ENCODE measurements at regions of chr12 and their contacts with region 1.

Region 1: DNA sequence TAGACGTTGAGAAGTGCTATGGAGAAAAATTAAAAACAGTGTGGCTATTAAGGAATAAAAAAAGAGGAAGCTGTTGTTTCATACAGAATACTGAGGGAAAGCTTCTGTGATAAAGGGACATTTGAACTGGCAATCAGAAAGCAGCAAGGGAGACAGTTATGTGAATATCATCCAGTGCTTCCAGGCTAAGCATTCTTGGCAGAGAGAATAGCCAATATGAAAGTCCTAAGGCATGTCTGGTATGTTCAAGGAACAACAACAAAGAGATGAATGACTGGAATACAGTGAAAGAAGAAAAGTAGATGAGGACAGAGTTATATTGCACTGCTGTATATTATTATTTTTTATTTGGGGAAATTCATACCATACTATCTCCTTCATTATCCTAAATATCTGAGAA is 23.9 kb downstream of the SCAF11 start:
- DNase-seq: no peak
- ATAC-seq: no peak
- H3K4me3 ChIP-seq: no peak overlapping the region
- H3K4me3 Mint-ChIP-seq: no peak overlapping the region
- H3K27ac ChIP-seq: no peak overlapping the region
- H3K27ac Mint-ChIP-seq: peak overlapping the region in 1 of 2 donors; percentile 2
- H3K4me1 ChIP-seq: peaks cover 2 to 3% of the 10 kb centered on the region in 2 experiments
- H3K4me1 Mint-ChIP-seq: peaks cover 74 to 87% (median 80%) of the 10 kb centered on the region in 3 donors
- H3K27me3 ChIP-seq: no peaks in the 10 kb centered on the region
- H3K27me3 Mint-ChIP-seq: no peaks in the 10 kb centered on the region

Region 2: GRCh38 chr12:47408171-47408871 is 1441.8 kb after region 1 on chr12:
- CTCF ChIA-PET with region 1: interaction called in 1 of 2 experiments, 12 read pairs
- POLR2A ChIA-PET with region 1: no interaction called
- DNase-seq: peak in 19 of 35 experiments; percentile 6 to 66 (median 31)
- ATAC-seq: peak; percentile 60 to 72 (median 64)
- H3K4me3 ChIP-seq: no peak overlapping the region
- H3K4me3 Mint-ChIP-seq: peak overlapping the region in 1 of 3 donors; percentile 53
- H3K27ac ChIP-seq: no peak overlapping the region
- H3K27ac Mint-ChIP-seq: peak overlapping the region; percentile 69 to 95
- H3K4me1 ChIP-seq: peaks cover 41 to 67% of the 10 kb centered on the region in 2 experiments
- H3K4me1 Mint-ChIP-seq: peaks cover 63 to 78% (median 75%) of the 10 kb centered on the region in 3 donors
- H3K27me3 ChIP-seq: no peaks in the 10 kb centered on the region
- H3K27me3 Mint-ChIP-seq: no peaks in the 10 kb centered on the region